ENCODE measurements at regions of chr4 and their contacts with region 1.

Region 1: GRCh38 chr4:88514557-88515511 is 8.7 kb downstream of the PYURF start:
- DNase-seq: no peak
- ATAC-seq: no peak
- H3K4me3 ChIP-seq: no peak overlapping the region
- H3K27ac ChIP-seq: no peak overlapping the region
- H3K4me1 ChIP-seq: no peaks in the 10 kb centered on the region
- H3K27me3 ChIP-seq: no peaks in the 10 kb centered on the region
- CTCF ChIP-seq: no peak
- POLR2A ChIP-seq: no peak
- RAD21 ChIP-seq: no peak

Region 2: DNA sequence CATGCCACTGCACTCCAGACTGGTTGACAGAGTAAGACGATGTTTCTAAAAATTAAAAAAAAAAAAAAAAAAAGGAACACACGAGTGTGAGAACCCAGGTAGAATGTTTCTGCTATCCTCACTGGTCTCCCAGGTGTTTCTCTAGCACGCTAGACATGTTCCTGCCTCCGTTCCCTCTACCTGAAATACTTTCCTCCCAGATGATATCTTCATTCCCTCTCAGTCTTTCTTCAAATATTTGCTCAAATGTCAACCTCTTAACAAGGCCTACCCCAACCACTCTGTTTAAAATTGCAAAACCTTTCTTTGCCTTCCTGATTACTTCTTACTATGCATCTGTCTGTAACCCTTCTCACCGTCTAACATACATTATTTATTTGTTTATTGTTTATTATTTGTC is 296.9 kb before region 1 on chr4:
- CTCF ChIA-PET with region 1: interaction called, 138 read pairs
- POLR2A ChIA-PET with region 1: interaction called, 4 read pairs
- RAD21 ChIA-PET with region 1: interaction called, 9 to 16 read pairs
- intact Hi-C with region 1: loop called (anchors 1 kb)
- DNase-seq: no peak
- ATAC-seq: no peak
- H3K4me3 ChIP-seq: no peak overlapping the region
- H3K27ac ChIP-seq: no peak overlapping the region
- H3K4me1 ChIP-seq: no peaks in the 10 kb centered on the region
- H3K27me3 ChIP-seq: no peaks in the 10 kb centered on the region
- CTCF ChIP-seq: no peak
- POLR2A ChIP-seq: no peak
- RAD21 ChIP-seq: no peak